Panc1 (cell line): ENCODE measurements at regions of chrX and their contacts with region 1.

Region 1: DNA sequence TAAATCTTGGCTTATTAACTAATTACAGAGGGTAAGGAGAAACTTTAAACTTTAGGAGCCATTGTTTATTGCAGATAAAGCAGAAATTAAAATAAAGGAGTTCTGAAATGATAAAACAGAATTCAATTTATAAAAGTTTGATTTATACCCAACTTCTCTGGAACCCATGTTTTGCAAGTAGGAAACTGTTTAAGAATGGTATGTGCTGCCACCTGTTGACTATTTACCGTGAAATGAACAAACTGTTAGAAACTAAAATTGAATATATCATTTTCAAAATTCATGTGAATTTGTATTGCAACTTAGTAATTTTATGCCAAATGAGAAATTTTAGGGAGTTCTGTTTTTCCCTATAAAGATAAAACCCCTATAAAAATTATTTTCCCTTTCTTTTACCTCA is 11.0 kb upstream of the TBC1D8B start:
- DNase-seq: no peak
- ATAC-seq: no peak
- H3K4me3 ChIP-seq: no peak overlapping the region
- H3K27ac ChIP-seq: no peak overlapping the region
- H3K4me1 ChIP-seq: no peaks in the 10 kb centered on the region
- H3K27me3 ChIP-seq: no peaks in the 10 kb centered on the region
- CTCF ChIP-seq: peak; percentile 48; the same call in 1 of the 2 replicates

Region 2: DNA sequence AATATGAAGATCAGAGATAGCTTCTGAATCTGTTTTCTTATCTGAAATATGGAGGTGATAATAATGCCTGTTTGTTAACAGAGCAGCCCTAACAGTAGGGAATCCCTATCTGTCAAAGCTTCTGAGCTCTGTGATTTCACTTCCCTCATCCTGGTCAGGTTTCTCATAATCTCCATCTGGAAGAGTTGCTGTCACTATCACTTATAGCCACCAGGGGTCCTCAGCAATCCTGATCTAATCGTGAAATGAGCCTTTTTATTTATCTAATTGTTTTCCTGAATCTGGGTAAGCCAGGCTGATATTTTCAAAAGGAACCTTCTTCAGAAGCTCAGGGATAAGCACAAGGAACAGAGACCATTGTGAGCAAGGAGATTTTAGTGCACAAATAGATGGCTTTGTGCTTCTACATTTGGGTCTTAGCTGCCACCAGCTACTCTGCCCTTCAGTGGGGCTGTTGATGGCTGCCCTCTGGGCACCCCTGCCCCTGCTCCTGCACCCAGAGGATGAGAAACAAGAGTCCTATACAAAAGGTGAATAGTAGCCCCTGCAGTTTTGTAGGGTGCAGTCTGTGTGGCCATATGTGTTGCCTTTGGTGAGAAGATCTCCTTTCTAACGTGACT is 376.1 kb before region 1 on chrX:
- CTCF ChIA-PET with region 1: no interaction called
- POLR2A ChIA-PET with region 1: no interaction called
- in situ Hi-C with region 1: no loop called
- intact Hi-C with region 1: loop called (anchors 5 kb)
- DNase-seq: no peak
- ATAC-seq: peak; percentile 62; the same call in 1 of the 2 replicates
- H3K4me3 ChIP-seq: no peak overlapping the region
- H3K27ac ChIP-seq: no peak overlapping the region
- H3K4me1 ChIP-seq: no peaks in the 10 kb centered on the region
- H3K27me3 ChIP-seq: no peaks in the 10 kb centered on the region
- CTCF ChIP-seq: peak; percentile 77

Region 3: DNA sequence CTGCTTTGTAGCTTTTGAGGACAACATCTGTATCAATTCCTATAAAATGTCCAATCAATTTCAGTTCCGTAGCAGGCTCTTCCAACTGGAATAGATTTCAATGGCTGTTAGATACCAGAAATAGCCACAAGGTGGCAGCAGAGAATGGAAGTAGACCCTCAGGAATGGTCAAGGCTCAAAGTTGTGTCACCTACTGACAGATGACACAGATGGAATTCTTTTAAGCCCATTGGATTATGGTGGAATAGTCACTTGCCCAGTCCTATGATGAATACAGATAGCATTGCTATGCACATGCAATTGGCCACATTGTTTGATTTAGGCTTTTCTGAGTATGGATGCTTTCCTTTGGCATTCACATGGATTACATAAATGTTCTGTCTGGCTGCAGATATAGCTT is 310.2 kb before region 1 on chrX:
- CTCF ChIA-PET with region 1: no interaction called
- POLR2A ChIA-PET with region 1: no interaction called
- in situ Hi-C with region 1: no loop called
- intact Hi-C with region 1: loop called (anchors 2 kb)
- DNase-seq: peak; percentile 41
- ATAC-seq: peak; percentile 82
- H3K4me3 ChIP-seq: no peak overlapping the region
- H3K27ac ChIP-seq: no peak overlapping the region
- H3K4me1 ChIP-seq: no peaks in the 10 kb centered on the region
- H3K27me3 ChIP-seq: peaks cover 2% of the 10 kb centered on the region; the same call in 1 of the 2 replicates
- CTCF ChIP-seq: peak; percentile 79

Region 4: GRCh38 chrX:106611679-106612392 is 179.7 kb before region 1 on chrX and contains the start of gene RADX:
- CTCF ChIA-PET with region 1: no interaction called
- POLR2A ChIA-PET with region 1: no interaction called
- in situ Hi-C with region 1: no loop called
- intact Hi-C with region 1: loop called (anchors 5 kb)
- DNase-seq: peak; percentile 67
- ATAC-seq: peak; percentile 99
- H3K4me3 ChIP-seq: peak within 1 kb of the TSS; percentile 70 to 91
- H3K27ac ChIP-seq: peak within 1 kb of the TSS; percentile 65
- H3K4me1 ChIP-seq: peaks cover 3% of the 10 kb centered on the region
- H3K27me3 ChIP-seq: no peaks in the 10 kb centered on the region; the same call in 1 of the 2 replicates
- CTCF ChIP-seq: no peak
- total RNA-seq, gene RADX: 5.2 TPM

Region 5: DNA sequence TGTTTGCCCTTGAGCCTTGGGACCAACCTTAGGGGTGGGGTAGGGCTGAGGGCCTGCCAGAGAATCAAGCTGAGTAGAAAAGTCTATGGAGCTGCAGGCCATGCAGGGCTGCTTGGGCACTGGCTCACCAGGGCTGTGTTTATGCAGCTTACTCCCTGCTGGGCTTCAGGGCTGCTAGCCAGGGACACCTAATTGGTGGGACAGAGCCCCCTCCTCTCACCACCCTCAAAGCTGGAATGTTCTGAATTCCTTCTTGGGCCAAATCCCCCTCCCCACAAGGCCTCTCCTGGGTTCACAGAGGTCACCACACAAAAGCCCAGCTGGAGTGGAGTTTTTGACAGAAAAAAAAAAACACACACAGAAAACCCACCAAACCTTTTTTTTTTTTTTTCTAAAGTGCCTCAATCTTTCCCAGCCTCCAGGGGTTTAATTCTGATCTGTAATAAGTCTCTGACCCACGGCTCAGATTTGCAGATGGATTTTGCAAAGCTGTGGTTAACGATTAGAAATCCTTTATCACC is 128.5 kb after region 1 on chrX and contains the start of gene CLDN2:
- CTCF ChIA-PET with region 1: no interaction called
- POLR2A ChIA-PET with region 1: interaction called, 12 read pairs
- in situ Hi-C with region 1: no loop called
- intact Hi-C with region 1: no loop called
- DNase-seq: no peak
- ATAC-seq: no peak
- H3K4me3 ChIP-seq: no peak within 1 kb of the TSS
- H3K27ac ChIP-seq: no peak within 1 kb of the TSS
- H3K4me1 ChIP-seq: no peaks in the 10 kb centered on the region
- H3K27me3 ChIP-seq: peaks cover 3% of the 10 kb centered on the region; the same call in 1 of the 2 replicates
- CTCF ChIP-seq: no peak
- total RNA-seq, gene CLDN2: 0.10 TPM